OCI-LY7 (cell line): ENCODE measurements at regions of chr2 and their contacts with region 1.

Region 1: GRCh38 chr2:68734688-68735525 is at the start of gene ARHGAP25:
- DNase-seq: peak; percentile 85
- H3K4me3 ChIP-seq: peak within 1 kb of the TSS; percentile 73
- H3K27ac ChIP-seq: peak within 1 kb of the TSS; percentile 94
- H3K4me1 ChIP-seq: peaks cover 55% of the 10 kb centered on the region
- CTCF ChIP-seq: no peak
- total RNA-seq, gene ARHGAP25: 18.6 and 22.3 TPM in 2 replicates

Region 2: GRCh38 chr2:68715353-68716041 is 19.4 kb before region 1 on chr2:
- CTCF ChIA-PET with region 1: interaction called, 3 read pairs
- POLR2A ChIA-PET with region 1: interaction called, 22 read pairs
- intact Hi-C with region 1: loop called (anchors 2 kb)
- DNase-seq: peak; percentile 87
- H3K4me3 ChIP-seq: peak overlapping the region; percentile 51
- H3K27ac ChIP-seq: peak overlapping the region; percentile 68
- H3K4me1 ChIP-seq: peaks cover 31% of the 10 kb centered on the region
- CTCF ChIP-seq: peak; percentile 90

Region 3: DNA sequence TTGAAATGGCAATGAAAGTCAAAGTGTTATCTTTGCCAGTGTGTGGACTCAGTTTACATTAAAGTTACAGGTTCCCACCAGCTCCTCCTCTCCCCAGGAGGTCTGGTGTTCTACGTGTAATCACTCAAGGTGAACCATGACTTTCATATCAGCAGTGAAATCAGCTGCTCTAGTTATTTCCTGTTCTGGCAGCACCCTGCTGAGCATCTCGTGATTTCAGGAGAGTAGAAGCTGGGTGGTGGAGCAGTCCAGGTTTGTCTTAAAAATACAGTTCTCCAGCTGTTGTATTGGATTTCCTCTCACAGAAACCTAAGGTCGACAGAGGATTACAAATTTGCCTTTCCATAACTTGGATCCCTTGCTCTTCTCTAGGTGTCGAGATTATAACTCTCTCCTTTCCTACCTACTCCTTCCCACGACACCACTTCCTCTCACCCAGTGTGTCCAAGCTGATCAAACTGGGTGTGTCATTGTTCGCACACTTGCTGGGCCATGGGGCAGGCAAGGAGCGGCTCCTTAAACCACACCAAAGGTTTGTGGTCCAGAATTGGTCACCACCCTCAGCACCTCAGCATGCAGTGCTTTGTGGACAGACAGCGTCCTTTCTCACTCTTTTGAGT is 13.3 kb before region 1 on chr2:
- CTCF ChIA-PET with region 1: interaction called, 6 read pairs
- POLR2A ChIA-PET with region 1: interaction called, 22 read pairs
- intact Hi-C with region 1: no loop called
- DNase-seq: peak; percentile 73
- H3K4me3 ChIP-seq: peak overlapping the region; percentile 32
- H3K27ac ChIP-seq: peak overlapping the region; percentile 59
- H3K4me1 ChIP-seq: peaks cover 60% of the 10 kb centered on the region
- CTCF ChIP-seq: no peak